ENCODE measurements at regions of chr5 and their contacts with region 1.

Region 1: DNA sequence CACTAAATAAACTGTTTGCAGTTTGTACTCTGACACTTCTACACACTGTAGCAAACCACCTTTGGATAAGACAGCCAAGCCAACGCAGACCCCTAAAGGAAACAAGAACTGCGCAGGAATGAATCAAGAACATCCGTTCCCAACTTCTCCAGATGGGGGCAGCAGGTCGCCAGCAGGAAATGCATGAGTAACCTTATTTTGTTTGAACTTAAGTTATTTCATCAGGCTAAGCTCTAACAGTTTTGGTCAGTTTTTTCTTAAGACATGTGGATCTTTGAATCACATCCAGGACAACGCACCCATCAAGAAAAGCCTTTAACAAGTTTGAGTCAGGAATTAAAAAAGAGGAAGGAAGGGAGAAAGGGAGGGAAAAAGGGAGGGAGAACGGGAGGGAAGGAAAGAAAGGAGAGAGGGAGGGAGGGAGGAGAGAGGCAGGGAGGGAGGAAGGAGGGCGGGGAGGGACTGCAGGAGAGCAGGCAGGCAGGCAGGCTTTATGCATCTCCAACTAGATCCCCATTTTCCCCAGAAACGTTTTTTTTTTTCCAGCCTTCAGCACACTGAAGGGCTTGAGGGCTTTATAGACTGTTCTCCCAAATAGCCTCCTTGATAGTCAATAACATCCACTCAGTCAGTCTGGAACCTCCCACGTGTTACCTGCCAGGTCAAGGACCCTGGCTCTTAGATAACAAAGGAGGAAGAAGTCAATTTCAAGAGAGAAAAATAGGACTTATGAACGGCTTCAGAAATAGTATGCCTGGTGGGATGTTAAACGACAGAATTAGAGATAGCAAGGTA is 22.2 kb downstream of the BHMT start:
- DNase-seq: peak; percentile 56 to 72
- H3K4me3 ChIP-seq: no peak overlapping the region
- H3K4me3 Mint-ChIP-seq: peak overlapping the region; percentile 79
- H3K27ac Mint-ChIP-seq: peak overlapping the region; percentile 79
- H3K4me1 ChIP-seq: 0 out of 2 replicates have a peak, but pooled peaks cover 5% of the 10 kb centered on the region
- H3K4me1 Mint-ChIP-seq: peaks cover 13% of the 10 kb centered on the region
- H3K27me3 ChIP-seq: no peaks in the 10 kb centered on the region
- H3K27me3 Mint-ChIP-seq: no peaks in the 10 kb centered on the region
- CTCF ChIP-seq: peak; percentile 90 to 93

Region 2: DNA sequence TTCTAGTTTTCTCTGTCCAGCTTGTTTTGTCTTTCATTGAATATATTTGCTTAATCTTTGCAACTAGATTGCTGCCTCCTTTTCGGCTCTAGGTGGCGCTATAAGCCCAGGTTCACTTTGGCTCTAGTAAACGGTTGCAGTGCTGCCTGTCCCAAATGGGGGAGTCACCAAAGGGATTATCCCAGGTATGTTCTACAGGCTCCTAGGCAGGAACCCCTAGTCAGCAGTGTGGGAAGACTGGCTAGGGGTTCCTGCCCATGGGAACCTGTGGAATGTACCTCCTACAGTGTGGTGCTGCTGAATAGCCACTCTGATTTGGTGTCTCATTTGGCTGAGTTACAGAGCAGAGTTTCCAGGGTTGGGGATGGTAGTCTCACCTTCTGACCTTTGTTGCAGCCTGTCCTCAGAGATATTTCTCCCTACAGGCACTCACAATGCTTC is 233.9 kb before region 1 on chr5:
- CTCF ChIA-PET with region 1: no interaction called
- POLR2A ChIA-PET with region 1: no interaction called
- intact Hi-C with region 1: loop called (anchors 2 kb)
- DNase-seq: peak; percentile 71
- H3K4me3 ChIP-seq: no peak overlapping the region
- H3K4me3 Mint-ChIP-seq: no peak overlapping the region
- H3K27ac Mint-ChIP-seq: no peak overlapping the region
- H3K4me1 ChIP-seq: 0 out of 2 replicates have a peak, but pooled peaks cover 4% of the 10 kb centered on the region
- H3K4me1 Mint-ChIP-seq: no peaks in the 10 kb centered on the region
- H3K27me3 ChIP-seq: no peaks in the 10 kb centered on the region
- H3K27me3 Mint-ChIP-seq: no peaks in the 10 kb centered on the region
- CTCF ChIP-seq: peak; percentile 69 to 86

Region 3: DNA sequence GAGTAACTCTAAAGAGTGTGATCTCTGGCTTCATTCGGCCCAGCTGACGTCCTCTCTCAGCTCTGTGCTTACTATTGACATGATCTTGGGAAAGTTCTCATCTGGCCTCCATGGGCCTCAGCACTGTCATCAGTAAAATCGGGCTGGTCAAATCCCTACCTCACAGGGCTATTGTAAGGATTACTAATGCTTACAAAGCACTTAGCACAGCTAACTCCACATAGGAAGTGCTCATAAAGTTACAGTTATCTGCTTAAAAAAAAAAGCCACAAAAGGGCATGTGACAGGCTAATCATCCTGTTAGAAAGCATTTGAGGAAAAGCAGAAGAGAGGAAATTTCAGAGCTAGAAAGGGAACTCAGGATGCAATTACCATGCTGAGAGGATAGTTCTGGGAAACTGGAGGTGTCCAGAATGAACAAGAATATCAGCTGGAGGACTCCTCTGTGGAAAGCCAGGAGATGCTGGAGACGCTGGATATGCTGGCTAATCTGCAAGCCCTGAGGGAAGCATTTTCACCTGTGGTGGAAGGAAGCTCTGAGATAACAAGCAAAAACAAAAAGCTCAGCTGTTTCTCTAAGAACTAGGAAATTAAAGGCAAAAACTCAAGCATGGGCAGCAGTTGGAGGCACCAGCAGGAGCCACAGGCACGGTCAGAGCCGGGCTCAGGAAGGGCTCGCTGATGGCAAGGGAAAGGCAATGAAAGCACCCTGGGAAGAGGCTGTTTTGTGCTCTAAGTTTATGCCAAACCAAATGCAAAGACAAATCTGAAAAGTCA is 26.6 kb before region 1 on chr5:
- CTCF ChIA-PET with region 1: interaction called, 11 read pairs
- POLR2A ChIA-PET with region 1: no interaction called
- intact Hi-C with region 1: no loop called
- DNase-seq: no peak
- H3K4me3 ChIP-seq: no peak overlapping the region
- H3K4me3 Mint-ChIP-seq: no peak overlapping the region
- H3K27ac Mint-ChIP-seq: no peak overlapping the region
- H3K4me1 ChIP-seq: no peaks in the 10 kb centered on the region
- H3K4me1 Mint-ChIP-seq: no peaks in the 10 kb centered on the region
- H3K27me3 ChIP-seq: 0 out of 2 replicates have a peak, but pooled peaks cover 2% of the 10 kb centered on the region
- H3K27me3 Mint-ChIP-seq: peaks cover 9% of the 10 kb centered on the region
- CTCF ChIP-seq: no peak

Region 4: DNA sequence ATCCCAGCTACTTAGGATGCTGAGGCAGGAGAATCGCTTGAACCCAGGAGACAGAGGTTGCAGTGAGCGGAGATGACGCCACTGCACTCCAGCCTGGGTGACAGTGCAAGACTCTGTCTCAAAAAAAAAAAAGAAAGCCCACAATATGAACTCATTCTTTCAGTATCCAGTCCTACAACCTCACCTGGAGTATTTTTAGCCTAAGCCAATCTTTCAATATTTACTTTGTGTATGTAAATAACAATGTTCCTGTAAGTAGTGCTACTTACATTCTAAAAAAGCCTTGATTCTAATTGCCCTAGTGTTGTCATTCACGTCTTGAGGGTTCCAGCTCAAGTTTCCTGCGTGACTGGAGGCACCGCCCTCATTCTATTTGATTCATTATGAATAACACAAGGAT is 39.8 kb after region 1 on chr5:
- CTCF ChIA-PET with region 1: interaction called, 5 read pairs
- POLR2A ChIA-PET with region 1: no interaction called
- intact Hi-C with region 1: loop called (anchors 1 kb)
- DNase-seq: peak in 1 of 2 experiments; percentile 42
- H3K4me3 ChIP-seq: no peak overlapping the region
- H3K4me3 Mint-ChIP-seq: no peak overlapping the region
- H3K27ac Mint-ChIP-seq: no peak overlapping the region
- H3K4me1 ChIP-seq: peaks cover 29% of the 10 kb centered on the region
- H3K4me1 Mint-ChIP-seq: peaks cover 5% of the 10 kb centered on the region
- H3K27me3 ChIP-seq: no peaks in the 10 kb centered on the region
- H3K27me3 Mint-ChIP-seq: no peaks in the 10 kb centered on the region
- CTCF ChIP-seq: no peak

Region 5: GRCh38 chr5:79333852-79334557 is 200.2 kb after region 1 on chr5:
- CTCF ChIA-PET with region 1: no interaction called
- POLR2A ChIA-PET with region 1: no interaction called
- intact Hi-C with region 1: loop called (anchors 5 kb)
- DNase-seq: no peak
- H3K4me3 ChIP-seq: no peak overlapping the region
- H3K4me3 Mint-ChIP-seq: no peak overlapping the region
- H3K27ac Mint-ChIP-seq: no peak overlapping the region
- H3K4me1 ChIP-seq: no peaks in the 10 kb centered on the region
- H3K4me1 Mint-ChIP-seq: no peaks in the 10 kb centered on the region
- H3K27me3 ChIP-seq: no peaks in the 10 kb centered on the region; the same call in 1 of the 2 replicates
- H3K27me3 Mint-ChIP-seq: no peaks in the 10 kb centered on the region
- CTCF ChIP-seq: peak; percentile 13 to 21

Region 6: GRCh38 chr5:79514391-79515105 is 380.7 kb after region 1 on chr5:
- CTCF ChIA-PET with region 1: interaction called, 4 read pairs
- POLR2A ChIA-PET with region 1: interaction called, 11 read pairs
- intact Hi-C with region 1: no loop called
- DNase-seq: peak; percentile 93 to 96
- H3K4me3 ChIP-seq: peak overlapping the region; percentile 93
- H3K4me3 Mint-ChIP-seq: peak overlapping the region; percentile 85
- H3K27ac Mint-ChIP-seq: peak overlapping the region; percentile 91
- H3K4me1 ChIP-seq: peaks cover 18% of the 10 kb centered on the region; the same call in 1 of the 2 replicates
- H3K4me1 Mint-ChIP-seq: peaks cover 10% of the 10 kb centered on the region
- H3K27me3 ChIP-seq: no peaks in the 10 kb centered on the region
- H3K27me3 Mint-ChIP-seq: no peaks in the 10 kb centered on the region
- CTCF ChIP-seq: no peak

Measured in Caco-2 (cell line).